CD4-positive, alpha-beta T cell (primary cell): ENCODE measurements at regions of chr6 and their contacts with region 1.

Region 1: DNA sequence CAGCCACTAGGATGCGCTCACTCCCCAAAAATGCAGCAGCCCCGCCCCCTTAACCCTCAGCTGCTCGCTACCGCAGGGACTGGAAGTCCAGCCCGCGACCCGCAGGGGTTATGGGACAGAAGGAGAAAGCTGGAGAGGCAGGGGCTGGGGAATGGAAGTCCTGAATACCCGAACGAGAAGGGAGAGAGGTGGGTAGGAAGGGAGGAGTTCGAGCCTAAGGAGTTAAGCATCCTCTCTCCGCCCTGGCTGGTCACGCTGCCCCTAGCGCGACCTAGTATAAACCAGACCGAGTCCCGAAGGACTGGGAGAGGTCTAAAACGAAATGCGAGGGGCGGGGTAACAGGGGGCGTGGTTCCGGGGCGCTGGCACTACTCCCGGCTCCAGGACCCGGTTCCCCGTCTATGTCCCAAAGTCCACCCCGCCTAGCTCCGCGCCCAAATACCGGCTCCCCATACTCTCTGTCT is 448 bp upstream of the DDAH2 start:
- DNase-seq: peak; percentile 69 to 90 (median 77)
- ATAC-seq: peak; percentile 76
- H3K4me3 ChIP-seq: peak overlapping the region; percentile 77
- H3K4me3 Mint-ChIP-seq: peak overlapping the region; percentile 98
- H3K27ac ChIP-seq: peak overlapping the region; percentile 45 to 68
- H3K27ac Mint-ChIP-seq: peak overlapping the region; percentile 61
- H3K4me1 ChIP-seq: peaks cover 66% of the 10 kb centered on the region
- H3K4me1 Mint-ChIP-seq: peaks cover 67% of the 10 kb centered on the region
- H3K27me3 ChIP-seq: no peaks in the 10 kb centered on the region
- H3K27me3 Mint-ChIP-seq: no peaks in the 10 kb centered on the region
- CTCF ChIP-seq: peak; percentile 89

Region 2: GRCh38 chr6:31702819-31703522 is 26.6 kb before region 1 on chr6 and contains the start of gene ABHD16A:
- CTCF ChIA-PET with region 1: interaction called, 3 read pairs
- POLR2A ChIA-PET with region 1: interaction called, 7 read pairs
- intact Hi-C with region 1: loop called in 1 of 2 experiments (anchors 2 kb)
- DNase-seq: peak; percentile 94 to 99 (median 97)
- ATAC-seq: peak; percentile 91
- H3K4me3 ChIP-seq: peak within 1 kb of the TSS; percentile 67
- H3K4me3 Mint-ChIP-seq: peak within 1 kb of the TSS; percentile 94
- H3K27ac ChIP-seq: peak within 1 kb of the TSS; percentile 95 to 98
- H3K27ac Mint-ChIP-seq: peak within 1 kb of the TSS; percentile 94
- H3K4me1 ChIP-seq: peaks cover 35% of the 10 kb centered on the region
- H3K4me1 Mint-ChIP-seq: peaks cover 33% of the 10 kb centered on the region
- H3K27me3 ChIP-seq: no peaks in the 10 kb centered on the region
- H3K27me3 Mint-ChIP-seq: no peaks in the 10 kb centered on the region
- CTCF ChIP-seq: no peak
- total RNA-seq, gene ABHD16A: 52.3 to 59.3 TPM

Region 3: DNA sequence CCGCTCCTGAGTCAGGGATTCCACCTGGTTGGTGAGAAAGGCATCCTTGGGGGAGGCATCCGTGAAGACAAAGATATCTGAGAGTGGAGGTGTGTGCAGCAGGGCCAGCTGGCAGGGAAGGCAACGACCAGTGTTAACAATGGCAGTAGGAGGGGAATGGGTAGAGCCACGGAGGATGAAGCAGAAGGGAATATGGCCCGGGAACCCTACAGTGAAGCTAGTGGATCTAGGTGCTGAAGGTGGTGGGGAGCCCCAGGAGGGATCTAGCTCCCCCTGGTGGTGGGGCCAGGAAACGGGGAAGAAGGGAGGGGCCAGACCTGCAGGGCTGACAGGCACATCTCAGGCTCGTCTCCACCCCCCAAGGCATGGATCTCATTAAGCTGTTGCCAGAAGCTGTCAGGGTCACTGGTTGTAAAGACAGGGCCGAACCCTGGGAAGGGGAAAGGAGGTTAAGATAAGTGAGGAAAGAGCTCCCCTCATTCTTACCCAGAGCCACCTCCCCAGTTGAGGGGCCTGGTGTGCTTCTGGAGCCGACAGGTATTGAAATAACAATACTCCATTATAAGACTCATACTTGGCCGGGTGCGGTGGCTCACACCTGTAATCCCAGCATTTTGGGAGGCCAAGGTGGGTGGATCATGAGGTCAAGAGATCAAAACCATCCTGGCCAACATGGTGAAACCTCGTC is 40.3 kb after region 1 on chr6:
- CTCF ChIA-PET with region 1: interaction called, 24 read pairs
- POLR2A ChIA-PET with region 1: interaction called, 7 read pairs
- intact Hi-C with region 1: loop called (anchors 1 to 2 kb)
- DNase-seq: peak; percentile 66 to 89 (median 75)
- ATAC-seq: peak; percentile 79
- H3K4me3 ChIP-seq: no peak overlapping the region
- H3K4me3 Mint-ChIP-seq: peak overlapping the region; percentile 48
- H3K27ac ChIP-seq: no peak overlapping the region
- H3K27ac Mint-ChIP-seq: no peak overlapping the region
- H3K4me1 ChIP-seq: peaks cover 49% of the 10 kb centered on the region
- H3K4me1 Mint-ChIP-seq: peaks cover 27% of the 10 kb centered on the region
- H3K27me3 ChIP-seq: no peaks in the 10 kb centered on the region
- H3K27me3 Mint-ChIP-seq: no peaks in the 10 kb centered on the region
- CTCF ChIP-seq: peak; percentile 63

Region 4: DNA sequence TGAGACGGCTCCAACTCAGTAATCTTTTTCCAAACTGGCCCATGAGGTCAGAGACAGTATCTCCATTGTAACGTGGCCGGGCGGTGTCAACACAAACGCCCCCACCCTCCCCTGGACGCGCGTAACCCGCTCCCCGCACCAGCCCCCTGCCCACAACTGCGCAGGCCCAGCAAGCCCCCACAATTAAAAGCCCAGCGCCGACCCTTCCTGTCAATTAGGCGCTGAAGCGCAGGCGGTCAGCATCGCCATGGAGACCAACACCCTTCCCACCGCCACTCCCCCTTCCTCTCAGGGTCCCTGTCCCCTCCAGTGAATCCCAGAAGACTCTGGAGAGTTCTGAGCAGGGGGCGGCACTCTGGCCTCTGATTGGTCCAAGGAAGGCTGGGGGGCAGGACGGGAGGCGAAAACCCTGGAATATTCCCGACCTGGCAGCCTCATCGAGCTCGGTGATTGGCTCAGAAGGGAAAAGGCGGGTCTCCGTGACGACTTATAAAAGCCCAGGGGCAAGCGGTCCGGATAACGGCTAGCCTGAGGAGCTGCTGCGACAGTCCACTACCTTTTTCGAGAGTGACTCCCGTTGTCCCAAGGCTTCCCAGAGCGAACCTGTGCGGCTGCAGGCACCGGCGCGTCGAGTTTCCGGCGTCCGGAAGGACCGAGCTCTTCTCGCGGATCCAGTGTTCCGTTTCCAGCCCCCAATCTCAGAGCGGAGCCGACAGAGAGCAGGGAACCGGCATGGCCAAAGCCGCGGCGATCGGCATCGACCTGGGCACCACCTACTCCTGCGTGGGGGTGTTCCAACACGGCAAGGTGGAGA is 85.7 kb after region 1 on chr6 and contains the starts of genes HSPA1A and HSPA1L:
- CTCF ChIA-PET with region 1: interaction called, 7 read pairs
- POLR2A ChIA-PET with region 1: interaction called, 12 read pairs
- intact Hi-C with region 1: loop called in 1 of 2 experiments (anchors 2 kb)
- DNase-seq: peak in 11 of 14 experiments; percentile 25 to 76 (median 60)
- ATAC-seq: peak; percentile 11
- H3K4me3 ChIP-seq: peak within 1 kb of the TSS; percentile 70
- H3K4me3 Mint-ChIP-seq: peak within 1 kb of the TSS; percentile 90
- H3K27ac ChIP-seq: peak within 1 kb of the TSS; percentile 75 to 81
- H3K27ac Mint-ChIP-seq: peak within 1 kb of the TSS; percentile 83
- H3K4me1 ChIP-seq: peaks cover 49% of the 10 kb centered on the region
- H3K4me1 Mint-ChIP-seq: peaks cover 47% of the 10 kb centered on the region
- H3K27me3 ChIP-seq: no peaks in the 10 kb centered on the region
- H3K27me3 Mint-ChIP-seq: no peaks in the 10 kb centered on the region
- CTCF ChIP-seq: no peak
- total RNA-seq, gene HSPA1A: 8.1 to 9.8 TPM
- total RNA-seq, gene HSPA1L: 1.7 to 1.8 TPM

Region 5: DNA sequence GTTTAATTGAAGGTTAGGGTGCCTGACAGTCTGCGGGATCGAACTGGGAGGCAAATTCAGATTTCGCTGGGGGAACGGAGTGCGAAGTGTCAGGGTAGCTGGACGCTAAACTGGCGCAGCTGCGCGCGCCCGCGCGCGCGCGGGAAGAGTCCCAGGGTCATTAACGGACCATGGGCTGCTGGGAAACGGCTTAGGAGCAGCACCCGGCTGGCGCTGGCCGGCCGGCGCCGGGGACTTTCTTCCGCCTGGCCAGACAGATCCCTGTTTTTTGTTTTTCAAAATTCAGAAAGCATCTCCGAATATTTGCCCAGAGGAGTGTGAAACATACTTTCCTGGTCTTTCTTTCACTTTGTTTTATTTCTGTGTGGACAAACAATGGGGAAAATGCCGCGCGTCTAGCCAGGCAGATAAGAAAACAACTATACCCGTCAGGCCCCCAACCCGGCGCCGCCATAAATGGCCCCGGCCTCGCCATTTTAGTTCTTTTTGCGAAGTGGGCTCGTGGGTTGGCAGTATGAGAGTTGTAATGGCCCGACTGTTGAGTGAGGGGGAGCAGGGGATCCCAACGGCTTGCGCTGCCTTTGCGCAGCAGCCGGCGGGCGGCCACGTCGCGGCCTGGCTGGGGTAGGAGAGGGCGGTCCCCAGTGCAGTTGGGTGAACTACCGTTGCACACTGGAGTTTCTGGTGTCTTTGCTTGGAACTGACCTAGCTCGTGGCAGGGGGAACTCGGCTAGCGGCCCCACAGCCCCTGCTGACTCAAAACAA is 105.1 kb after region 1 on chr6:
- CTCF ChIA-PET with region 1: interaction called, 16 read pairs
- POLR2A ChIA-PET with region 1: interaction called, 15 read pairs
- intact Hi-C with region 1: loop called (anchors 1 kb)
- DNase-seq: peak; percentile 72 to 89 (median 78)
- ATAC-seq: peak; percentile 71
- H3K4me3 ChIP-seq: peak overlapping the region; percentile 94
- H3K4me3 Mint-ChIP-seq: peak overlapping the region; percentile 96
- H3K27ac ChIP-seq: peak overlapping the region; percentile 97 to 98
- H3K27ac Mint-ChIP-seq: peak overlapping the region; percentile 98
- H3K4me1 ChIP-seq: peaks cover 66% of the 10 kb centered on the region
- H3K4me1 Mint-ChIP-seq: peaks cover 60% of the 10 kb centered on the region
- H3K27me3 ChIP-seq: no peaks in the 10 kb centered on the region
- H3K27me3 Mint-ChIP-seq: no peaks in the 10 kb centered on the region
- CTCF ChIP-seq: no peak